CD14-positive monocyte (primary cell): ENCODE measurements at regions of chr7 and their contacts with region 1.

Region 1: DNA sequence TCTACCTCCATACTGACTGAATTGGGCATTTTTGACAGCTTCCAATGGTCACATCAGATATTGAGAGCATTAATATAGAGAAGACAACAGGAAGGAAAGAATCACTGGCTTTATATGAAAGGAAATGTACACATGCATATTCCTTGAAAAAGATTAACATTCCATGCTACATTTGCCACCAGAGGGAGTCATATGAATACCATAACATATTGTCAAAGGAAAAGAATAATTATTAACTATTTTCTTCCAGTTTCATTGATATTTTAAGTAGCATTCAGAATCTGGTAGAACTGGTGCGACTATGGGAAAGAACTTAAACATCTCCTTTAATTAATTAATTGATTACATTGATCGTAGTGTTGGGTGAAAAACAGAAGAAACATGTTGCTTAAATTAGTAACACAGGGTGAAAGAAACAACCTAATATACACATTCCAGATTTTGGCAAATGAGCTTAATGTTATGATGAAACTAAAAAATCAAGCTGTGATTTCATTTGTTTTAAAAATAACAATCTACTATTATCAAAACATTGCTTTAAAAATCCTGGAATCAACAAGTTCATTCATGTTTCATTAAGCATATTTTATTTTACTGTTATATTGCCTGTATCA is 71.5 kb downstream of the GPR85 start:
- DNase-seq: no peak
- H3K4me3 ChIP-seq: no peak overlapping the region
- H3K4me3 Mint-ChIP-seq: no peak overlapping the region
- H3K27ac ChIP-seq: no peak overlapping the region
- H3K27ac Mint-ChIP-seq: no peak overlapping the region
- H3K4me1 ChIP-seq: no peaks in the 10 kb centered on the region
- H3K4me1 Mint-ChIP-seq: no peaks in the 10 kb centered on the region
- H3K27me3 ChIP-seq: no peaks in the 10 kb centered on the region
- H3K27me3 Mint-ChIP-seq: peaks cover 0 to 4% (median 0%) of the 10 kb centered on the region in 3 donors
- CTCF ChIP-seq: peak; percentile 31

Region 2: GRCh38 chr7:113414401-113415035 is 399.4 kb after region 1 on chr7:
- intact Hi-C with region 1: loop called in 1 of 2 experiments (anchors 10 kb)
- DNase-seq: no peak
- H3K4me3 ChIP-seq: no peak overlapping the region
- H3K4me3 Mint-ChIP-seq: no peak overlapping the region
- H3K27ac ChIP-seq: no peak overlapping the region
- H3K27ac Mint-ChIP-seq: no peak overlapping the region
- H3K4me1 ChIP-seq: no peaks in the 10 kb centered on the region
- H3K4me1 Mint-ChIP-seq: no peaks in the 10 kb centered on the region
- H3K27me3 ChIP-seq: no peaks in the 10 kb centered on the region
- H3K27me3 Mint-ChIP-seq: peaks cover 0 to 2% (median 0%) of the 10 kb centered on the region in 3 donors
- CTCF ChIP-seq: no peak